ENCODE measurements at regions of chr11 and their contacts with region 1.

Region 1: GRCh38 chr11:34916015-34916842 is at the starts of genes APIP and PDHX:
- DNase-seq: peak; percentile 86 to 96 (median 94)
- ATAC-seq: peak; percentile 89
- H3K4me3 ChIP-seq: peak within 1 kb of the TSS; percentile 70 to 94
- H3K4me3 Mint-ChIP-seq: peak within 1 kb of the TSS; percentile 96
- H3K27ac ChIP-seq: peak within 1 kb of the TSS; percentile 57 to 72
- H3K27ac Mint-ChIP-seq: peak within 1 kb of the TSS; percentile 97
- H3K4me1 ChIP-seq: peaks cover 18% of the 10 kb centered on the region
- H3K4me1 Mint-ChIP-seq: peaks cover 53% of the 10 kb centered on the region
- H3K27me3 ChIP-seq: no peaks in the 10 kb centered on the region
- H3K27me3 Mint-ChIP-seq: no peaks in the 10 kb centered on the region
- CTCF ChIP-seq: no peak
- total RNA-seq, gene APIP: 5.4 to 6.4 TPM
- total RNA-seq, gene PDHX: 20.3 to 21.4 TPM

Region 2: DNA sequence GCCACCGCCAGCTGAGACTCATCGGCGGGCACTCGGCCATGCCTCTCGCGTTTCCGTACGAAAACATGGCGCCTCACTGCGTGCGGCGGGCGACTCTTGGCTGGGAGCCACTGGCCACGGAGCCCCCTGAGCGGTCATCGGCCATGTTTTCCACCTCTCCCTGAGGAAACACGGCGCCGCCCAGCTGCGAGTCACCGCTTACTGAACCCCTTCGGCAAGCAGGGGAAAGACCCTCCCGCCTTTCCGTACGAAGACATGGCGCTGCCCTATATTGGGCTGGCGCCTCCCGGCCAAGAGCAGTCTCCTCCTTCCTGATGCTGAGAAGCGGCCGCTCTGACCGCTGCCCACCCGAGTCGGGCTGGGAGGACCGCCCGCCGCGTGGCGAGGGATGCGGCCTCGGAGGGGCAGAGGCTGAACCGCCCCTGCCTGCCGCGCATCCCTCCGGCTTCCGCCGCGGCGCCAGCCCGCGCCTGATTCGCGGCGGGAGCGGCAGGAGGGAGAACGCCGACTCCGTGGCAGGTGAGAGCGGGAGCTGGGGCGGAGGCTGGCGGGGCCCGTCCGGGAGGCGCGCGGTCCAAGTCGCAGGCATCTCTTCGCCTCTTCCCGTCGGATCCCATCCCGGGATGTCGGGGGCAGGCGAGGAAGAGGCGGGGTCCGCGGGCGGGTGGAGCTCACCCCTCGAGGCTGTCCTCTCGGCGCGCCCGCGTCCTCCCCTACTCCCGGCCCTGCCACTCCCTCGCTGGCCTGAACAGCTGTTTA is 1876.8 kb before region 1 on chr11 and contains the start of gene TCP11L1:
- CTCF ChIA-PET with region 1: no interaction called
- POLR2A ChIA-PET with region 1: no interaction called
- intact Hi-C with region 1: loop called in 1 of 2 experiments (anchors 10 kb)
- DNase-seq: peak; percentile 60 to 89 (median 83)
- ATAC-seq: peak; percentile 81
- H3K4me3 ChIP-seq: peak within 1 kb of the TSS; percentile 98
- H3K4me3 Mint-ChIP-seq: peak within 1 kb of the TSS; percentile 95
- H3K27ac ChIP-seq: peak within 1 kb of the TSS; percentile 71 to 86
- H3K27ac Mint-ChIP-seq: peak within 1 kb of the TSS; percentile 91
- H3K4me1 ChIP-seq: peaks cover 10% of the 10 kb centered on the region
- H3K4me1 Mint-ChIP-seq: peaks cover 20% of the 10 kb centered on the region
- H3K27me3 ChIP-seq: no peaks in the 10 kb centered on the region
- H3K27me3 Mint-ChIP-seq: no peaks in the 10 kb centered on the region
- CTCF ChIP-seq: no peak
- total RNA-seq, gene TCP11L1: 10.9 to 12.3 TPM

Region 3: GRCh38 chr11:34105079-34105956 is 810.9 kb before region 1 on chr11 and contains the start of gene NAT10:
- CTCF ChIA-PET with region 1: no interaction called
- POLR2A ChIA-PET with region 1: no interaction called
- intact Hi-C with region 1: loop called (anchors 1 kb)
- DNase-seq: peak; percentile 93 to 100 (median 98)
- ATAC-seq: peak; percentile 93
- H3K4me3 ChIP-seq: peak within 1 kb of the TSS; percentile 70 to 94
- H3K4me3 Mint-ChIP-seq: peak within 1 kb of the TSS; percentile 97
- H3K27ac ChIP-seq: peak within 1 kb of the TSS; percentile 81 to 90
- H3K27ac Mint-ChIP-seq: peak within 1 kb of the TSS; percentile 99
- H3K4me1 ChIP-seq: peaks cover 27% of the 10 kb centered on the region
- H3K4me1 Mint-ChIP-seq: peaks cover 60% of the 10 kb centered on the region
- H3K27me3 ChIP-seq: no peaks in the 10 kb centered on the region
- H3K27me3 Mint-ChIP-seq: no peaks in the 10 kb centered on the region
- CTCF ChIP-seq: no peak
- total RNA-seq, gene NAT10: 51.1 to 59.6 TPM

Region 4: GRCh38 chr11:34926101-34926830 is 10.0 kb after region 1 on chr11:
- CTCF ChIA-PET with region 1: interaction called, 7 read pairs
- POLR2A ChIA-PET with region 1: interaction called, 10 read pairs
- intact Hi-C with region 1: no loop called
- DNase-seq: peak in 3 of 9 experiments; percentile 12 to 73 (median 63)
- ATAC-seq: peak; percentile 71
- H3K4me3 ChIP-seq: no peak overlapping the region
- H3K4me3 Mint-ChIP-seq: no peak overlapping the region
- H3K27ac ChIP-seq: no peak overlapping the region
- H3K27ac Mint-ChIP-seq: no peak overlapping the region
- H3K4me1 ChIP-seq: peaks cover 3% of the 10 kb centered on the region
- H3K4me1 Mint-ChIP-seq: peaks cover 29% of the 10 kb centered on the region
- H3K27me3 ChIP-seq: no peaks in the 10 kb centered on the region
- H3K27me3 Mint-ChIP-seq: no peaks in the 10 kb centered on the region
- CTCF ChIP-seq: peak; percentile 96

Region 5: DNA sequence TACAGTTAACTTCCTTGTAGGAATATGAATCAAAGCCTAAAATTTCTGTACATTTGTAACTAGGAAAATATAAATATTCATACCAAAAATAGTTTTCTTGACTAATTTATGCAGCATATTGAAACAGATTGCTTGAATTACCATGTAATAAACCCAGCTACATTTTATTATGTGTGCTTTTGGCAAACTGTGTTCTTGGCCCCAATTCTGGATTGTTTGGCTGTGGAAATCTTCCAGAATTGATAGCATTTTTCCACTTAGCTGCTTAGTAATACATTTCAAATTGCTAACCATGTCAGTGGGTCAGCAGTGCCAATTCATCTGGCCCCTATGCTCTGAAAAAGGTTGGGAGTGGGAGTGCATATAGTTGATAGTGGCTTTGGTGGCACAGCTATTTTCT is 32.5 kb after region 1 on chr11:
- CTCF ChIA-PET with region 1: no interaction called
- POLR2A ChIA-PET with region 1: no interaction called
- intact Hi-C with region 1: no loop called
- DNase-seq: peak in 1 of 9 experiments; percentile 6
- ATAC-seq: no peak
- H3K4me3 ChIP-seq: no peak overlapping the region
- H3K4me3 Mint-ChIP-seq: no peak overlapping the region
- H3K27ac ChIP-seq: no peak overlapping the region
- H3K27ac Mint-ChIP-seq: no peak overlapping the region
- H3K4me1 ChIP-seq: no peaks in the 10 kb centered on the region
- H3K4me1 Mint-ChIP-seq: peaks cover 6% of the 10 kb centered on the region
- H3K27me3 ChIP-seq: no peaks in the 10 kb centered on the region
- H3K27me3 Mint-ChIP-seq: no peaks in the 10 kb centered on the region
- CTCF ChIP-seq: no peak

Region 6: GRCh38 chr11:35662649-35663407 is 746.6 kb after region 1 on chr11 and contains the start of gene TRIM44:
- CTCF ChIA-PET with region 1: no interaction called
- POLR2A ChIA-PET with region 1: no interaction called
- intact Hi-C with region 1: loop called (anchors 5 to 10 kb)
- DNase-seq: peak; percentile 57 to 89 (median 79)
- ATAC-seq: peak; percentile 81
- H3K4me3 ChIP-seq: peak within 1 kb of the TSS; percentile 91 to 97
- H3K4me3 Mint-ChIP-seq: peak within 1 kb of the TSS; percentile 96
- H3K27ac ChIP-seq: peak within 1 kb of the TSS; percentile 84 to 85
- H3K27ac Mint-ChIP-seq: peak within 1 kb of the TSS; percentile 97
- H3K4me1 ChIP-seq: peaks cover 23% of the 10 kb centered on the region
- H3K4me1 Mint-ChIP-seq: peaks cover 47% of the 10 kb centered on the region
- H3K27me3 ChIP-seq: peaks cover 0 to 4% of the 10 kb centered on the region in 2 experiments
- H3K27me3 Mint-ChIP-seq: no peaks in the 10 kb centered on the region
- CTCF ChIP-seq: no peak
- total RNA-seq, gene TRIM44: 25.7 to 29.5 TPM

Measured in CD8-positive, alpha-beta T cell (primary cell).